ENCODE measurements at regions of chr5 and their contacts with region 1.

Region 1: DNA sequence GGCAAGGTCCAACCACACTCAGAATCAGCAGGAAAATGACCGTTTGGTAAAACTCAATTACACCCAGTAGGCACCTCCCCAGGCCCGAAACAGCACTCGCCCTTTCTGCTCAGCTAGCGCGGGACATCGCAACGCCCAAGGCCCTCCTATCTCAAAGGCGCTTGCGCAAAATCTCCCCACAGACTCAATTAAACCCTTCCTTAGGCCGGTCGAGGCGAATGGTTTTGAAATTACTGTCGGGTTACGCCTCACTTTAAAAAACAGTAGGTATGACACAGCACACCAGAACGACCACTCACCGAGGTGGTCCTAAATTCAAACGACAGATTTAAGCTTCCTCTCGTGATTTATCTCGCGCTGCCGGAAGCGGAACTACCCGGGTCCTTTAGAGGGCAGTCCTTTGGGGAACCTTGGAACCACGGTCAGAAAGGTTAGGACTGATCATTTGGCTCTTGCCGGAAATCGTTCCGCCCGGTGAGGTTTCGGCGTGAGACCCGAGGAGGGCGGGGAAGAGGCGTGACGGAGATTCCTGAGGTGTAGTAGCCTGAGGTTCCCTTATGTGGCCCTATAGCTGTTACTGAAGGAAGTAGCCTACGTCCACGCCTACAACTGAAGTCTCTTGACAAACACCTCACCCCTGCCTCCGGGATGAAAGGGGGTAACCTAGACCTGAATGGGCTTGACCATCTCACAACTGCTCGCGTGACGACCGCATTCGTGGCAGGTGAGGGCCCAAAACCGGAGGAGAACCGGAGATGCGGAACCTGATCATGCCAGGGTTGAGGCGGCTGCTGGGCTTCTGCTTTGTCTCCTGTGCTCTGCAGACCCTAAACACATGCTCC is at the starts of genes GIN1 and PPIP5K2:
- DNase-seq: peak; percentile 97
- ATAC-seq: peak; percentile 93
- H3K4me3 Mint-ChIP-seq: peak within 1 kb of the TSS; percentile 85
- H3K27ac Mint-ChIP-seq: peak within 1 kb of the TSS; percentile 96
- H3K4me1 Mint-ChIP-seq: peaks cover 31% of the 10 kb centered on the region
- H3K27me3 Mint-ChIP-seq: no peaks in the 10 kb centered on the region
- total RNA-seq, gene GIN1: 7.5 to 14.9 TPM
- total RNA-seq, gene PPIP5K2: 65.7 to 68.2 TPM

Region 2: DNA sequence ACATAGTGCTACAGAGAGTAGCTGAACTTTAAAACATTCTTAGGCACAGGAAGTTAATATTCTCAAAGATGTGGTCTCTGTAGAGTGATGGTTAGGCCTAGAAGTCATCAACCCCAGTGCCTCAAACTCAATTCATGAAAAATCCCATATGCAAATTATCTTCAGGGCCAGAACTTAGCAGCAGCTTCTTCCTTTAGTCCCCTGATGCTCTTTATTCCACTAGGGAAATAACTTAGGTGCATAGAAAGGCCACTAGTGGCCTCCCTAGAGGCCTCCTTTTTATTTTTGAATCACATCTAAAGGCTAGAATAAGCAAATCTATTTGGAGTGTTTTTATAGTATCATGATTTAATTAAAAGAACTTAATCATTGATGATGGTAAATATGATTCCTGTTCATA is 88.4 kb before region 1 on chr5:
- CTCF ChIA-PET with region 1: no interaction called
- POLR2A ChIA-PET with region 1: no interaction called
- DNase-seq: no peak
- ATAC-seq: no peak
- H3K4me3 Mint-ChIP-seq: no peak overlapping the region
- H3K27ac Mint-ChIP-seq: no peak overlapping the region
- H3K4me1 Mint-ChIP-seq: no peaks in the 10 kb centered on the region
- H3K27me3 Mint-ChIP-seq: no peaks in the 10 kb centered on the region

Region 3: GRCh38 chr5:103094737-103095136 is 25.2 kb before region 1 on chr5:
- CTCF ChIA-PET with region 1: no interaction called
- POLR2A ChIA-PET with region 1: no interaction called
- DNase-seq: no peak
- ATAC-seq: no peak
- H3K4me3 Mint-ChIP-seq: no peak overlapping the region
- H3K27ac Mint-ChIP-seq: no peak overlapping the region
- H3K4me1 Mint-ChIP-seq: no peaks in the 10 kb centered on the region
- H3K27me3 Mint-ChIP-seq: no peaks in the 10 kb centered on the region

Region 4: DNA sequence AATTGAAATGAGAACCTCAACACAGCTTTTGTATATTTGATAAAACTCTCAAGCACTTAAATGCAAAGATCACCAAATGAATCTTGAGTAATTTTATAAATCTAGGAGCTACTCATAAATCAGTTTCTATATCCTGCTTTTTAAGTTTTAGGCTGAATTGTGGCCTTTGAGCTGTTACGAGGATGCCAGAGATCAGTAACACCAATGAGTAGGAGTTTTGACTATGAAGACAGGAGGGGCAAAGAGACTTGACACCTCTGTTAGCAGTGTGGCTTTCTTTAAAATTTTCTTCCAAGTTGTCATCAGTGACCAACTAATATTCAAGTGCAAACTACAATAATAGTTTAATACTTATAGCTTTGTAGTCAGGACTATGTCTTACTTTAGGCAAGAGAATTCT is 12.7 kb after region 1 on chr5:
- CTCF ChIA-PET with region 1: interaction called, 3 read pairs
- POLR2A ChIA-PET with region 1: interaction called, 10 read pairs
- DNase-seq: no peak
- ATAC-seq: no peak
- H3K4me3 Mint-ChIP-seq: no peak overlapping the region
- H3K27ac Mint-ChIP-seq: no peak overlapping the region
- H3K4me1 Mint-ChIP-seq: peaks cover 4% of the 10 kb centered on the region
- H3K27me3 Mint-ChIP-seq: no peaks in the 10 kb centered on the region

Region 5: GRCh38 chr5:103205991-103206700 is 86.2 kb after region 1 on chr5:
- CTCF ChIA-PET with region 1: no interaction called
- POLR2A ChIA-PET with region 1: no interaction called
- DNase-seq: no peak
- ATAC-seq: no peak
- H3K4me3 Mint-ChIP-seq: no peak overlapping the region
- H3K27ac Mint-ChIP-seq: peak overlapping the region; percentile 58
- H3K4me1 Mint-ChIP-seq: peaks cover 15% of the 10 kb centered on the region
- H3K27me3 Mint-ChIP-seq: no peaks in the 10 kb centered on the region

Region 6: GRCh38 chr5:103258368-103258956 is 138.5 kb after region 1 on chr5 and contains the start of gene MACIR:
- CTCF ChIA-PET with region 1: interaction called, 3 read pairs
- POLR2A ChIA-PET with region 1: interaction called, 11 read pairs
- DNase-seq: peak; percentile 97
- ATAC-seq: peak; percentile 97
- H3K4me3 Mint-ChIP-seq: peak within 1 kb of the TSS; percentile 85
- H3K27ac Mint-ChIP-seq: peak within 1 kb of the TSS; percentile 78
- H3K4me1 Mint-ChIP-seq: peaks cover 30% of the 10 kb centered on the region
- H3K27me3 Mint-ChIP-seq: peaks cover 21% of the 10 kb centered on the region
- total RNA-seq, gene MACIR: 6.7 to 7.6 TPM

Measured in activated CD8-positive, alpha-beta T cell treated with anti-CD3 and anti-CD28 coated beads, Interleukin-2, amount 10 ng/mL, durations not matched to agents 7 days and 5 days (primary cell).